Ascending aorta (tissue), 2 donors: ENCODE measurements at regions of chr17 and their contacts with region 1.

Region 1: DNA sequence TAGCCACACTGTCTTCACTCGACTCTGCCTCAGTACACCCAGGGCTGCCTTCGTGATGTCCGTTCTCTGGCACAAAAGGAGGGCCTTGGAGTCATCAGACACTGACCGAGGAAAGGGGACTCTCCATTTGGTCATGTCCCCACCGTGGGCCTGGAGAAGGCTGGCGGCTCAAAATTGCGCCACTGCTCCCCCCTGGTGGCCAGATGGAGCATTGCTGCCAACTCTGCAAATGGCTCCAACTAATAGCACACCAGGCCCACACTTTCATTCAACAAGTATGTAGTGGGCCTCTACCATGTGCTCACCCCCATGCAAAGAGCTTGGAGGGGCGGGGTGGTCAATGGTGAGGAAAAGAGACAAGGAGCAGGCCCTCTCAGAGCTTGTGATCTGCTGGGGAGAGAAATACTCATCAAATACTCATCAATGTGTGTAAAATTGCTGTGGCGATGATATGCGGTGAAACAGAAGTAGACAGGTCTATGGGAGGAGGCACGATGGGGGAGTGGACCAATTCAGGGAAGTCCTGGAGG is 5.2 kb upstream of the GRIN2C start:
- DNase-seq: peak in 1 of 2 donors; percentile 87
- H3K4me3 ChIP-seq: no peak overlapping the region
- H3K27ac ChIP-seq: no peak overlapping the region
- H3K4me1 ChIP-seq: peaks cover 8 to 12% of the 10 kb centered on the region in 2 donors
- H3K27me3 ChIP-seq: peaks cover 3% of the 10 kb centered on the region
- CTCF ChIP-seq: peak; percentile 89 to 96 (median 93)

Region 2: GRCh38 chr17:74770498-74771318 is 94.2 kb before region 1 on chr17:
- intact Hi-C with region 1: no loop called
- DNase-seq: no peak
- H3K4me3 ChIP-seq: no peak overlapping the region
- H3K27ac ChIP-seq: no peak overlapping the region
- H3K4me1 ChIP-seq: peaks cover 10 to 31% of the 10 kb centered on the region in 2 donors
- H3K27me3 ChIP-seq: no peaks in the 10 kb centered on the region
- CTCF ChIP-seq: peak; percentile 36 to 68 (median 59)

Region 3: DNA sequence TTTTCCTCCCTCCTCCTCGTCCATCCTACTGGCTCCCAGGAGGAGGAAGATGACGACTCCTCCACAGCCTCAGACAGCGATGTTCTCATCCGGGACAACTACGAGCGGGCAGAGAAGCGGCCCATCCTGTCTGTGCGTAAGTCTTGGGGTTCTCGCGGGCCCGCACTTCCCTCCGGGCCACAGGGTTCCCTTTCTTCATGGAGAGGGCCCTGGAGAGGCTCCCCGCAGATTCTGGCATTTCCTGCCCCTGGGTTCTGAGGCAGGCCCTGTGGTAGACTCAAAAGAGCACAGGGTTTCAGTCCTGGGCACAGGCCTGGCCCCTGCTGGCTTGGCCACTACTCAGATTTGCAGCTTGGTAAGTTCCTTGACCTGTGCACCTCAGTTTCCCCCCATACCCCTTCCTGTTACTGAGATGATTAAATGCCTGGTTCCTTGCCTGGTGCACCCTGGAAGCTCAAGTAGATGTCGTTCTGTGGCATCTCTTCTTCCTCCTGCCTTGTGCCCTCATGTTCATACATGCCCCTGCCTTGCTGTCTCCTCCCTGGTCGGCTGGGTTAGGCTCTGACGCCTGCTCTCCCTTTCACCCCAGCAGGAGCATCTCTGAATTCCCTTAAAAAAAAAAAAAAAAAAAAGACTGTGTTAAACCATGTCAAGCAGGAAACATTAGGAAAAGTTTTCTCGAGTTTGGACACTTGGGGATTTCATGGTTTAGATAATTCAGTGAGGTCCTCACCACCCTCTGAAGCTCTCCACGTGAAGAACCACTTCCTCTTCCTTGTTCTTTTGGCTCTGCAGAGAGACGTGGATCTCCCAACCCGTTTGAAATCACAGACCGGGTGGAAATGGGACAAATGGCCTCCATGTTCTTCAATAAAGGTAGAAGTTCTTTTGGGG is 74.5 kb before region 1 on chr17:
- intact Hi-C with region 1: loop called (anchors 2 kb)
- DNase-seq: no peak
- H3K4me3 ChIP-seq: no peak overlapping the region
- H3K27ac ChIP-seq: no peak overlapping the region
- H3K4me1 ChIP-seq: no peaks in the 10 kb centered on the region
- H3K27me3 ChIP-seq: no peaks in the 10 kb centered on the region
- CTCF ChIP-seq: no peak

Region 4: GRCh38 chr17:74842599-74843351 is 22.2 kb before region 1 on chr17:
- intact Hi-C with region 1: loop called (anchors 2 kb)
- DNase-seq: peak in 1 of 2 donors; percentile 72
- H3K4me3 ChIP-seq: peak overlapping the region; percentile 64 to 66
- H3K27ac ChIP-seq: no peak overlapping the region
- H3K4me1 ChIP-seq: peaks cover 0 to 6% of the 10 kb centered on the region in 2 donors
- H3K27me3 ChIP-seq: no peaks in the 10 kb centered on the region
- CTCF ChIP-seq: peak; percentile 49 to 73 (median 59)